CD4-positive, alpha-beta memory T cell (primary cell): ENCODE measurements at regions of chr10 and their contacts with region 1.

Region 1: DNA sequence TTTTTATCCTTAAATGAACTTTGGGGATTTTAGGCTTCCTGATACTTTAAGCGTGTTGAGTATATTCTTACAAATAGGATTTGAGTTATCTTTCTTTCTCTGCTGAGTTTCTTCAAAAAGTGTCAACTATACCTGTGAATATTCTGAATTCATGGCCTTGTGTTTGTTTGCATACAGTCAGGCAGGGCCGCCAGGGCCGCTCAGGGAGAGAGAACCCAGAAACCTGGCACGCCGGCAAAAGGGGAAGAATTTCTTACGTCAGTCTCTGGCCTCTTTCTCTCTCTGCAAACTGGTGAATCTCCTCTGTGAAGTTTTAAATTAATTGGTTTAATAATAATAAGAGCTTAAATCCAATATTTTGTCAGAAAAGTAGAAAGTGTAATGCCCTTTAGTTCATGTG is 29.3 kb upstream of the BNIP3 start:
- DNase-seq: no peak
- H3K4me3 ChIP-seq: no peak overlapping the region
- H3K4me3 Mint-ChIP-seq: no peak overlapping the region
- H3K27ac ChIP-seq: no peak overlapping the region
- H3K27ac Mint-ChIP-seq: no peak overlapping the region
- H3K4me1 ChIP-seq: no peaks in the 10 kb centered on the region
- H3K4me1 Mint-ChIP-seq: no peaks in the 10 kb centered on the region
- H3K27me3 ChIP-seq: no peaks in the 10 kb centered on the region
- H3K27me3 Mint-ChIP-seq: peaks cover 7 to 19% of the 10 kb centered on the region in 2 donors

Region 2: DNA sequence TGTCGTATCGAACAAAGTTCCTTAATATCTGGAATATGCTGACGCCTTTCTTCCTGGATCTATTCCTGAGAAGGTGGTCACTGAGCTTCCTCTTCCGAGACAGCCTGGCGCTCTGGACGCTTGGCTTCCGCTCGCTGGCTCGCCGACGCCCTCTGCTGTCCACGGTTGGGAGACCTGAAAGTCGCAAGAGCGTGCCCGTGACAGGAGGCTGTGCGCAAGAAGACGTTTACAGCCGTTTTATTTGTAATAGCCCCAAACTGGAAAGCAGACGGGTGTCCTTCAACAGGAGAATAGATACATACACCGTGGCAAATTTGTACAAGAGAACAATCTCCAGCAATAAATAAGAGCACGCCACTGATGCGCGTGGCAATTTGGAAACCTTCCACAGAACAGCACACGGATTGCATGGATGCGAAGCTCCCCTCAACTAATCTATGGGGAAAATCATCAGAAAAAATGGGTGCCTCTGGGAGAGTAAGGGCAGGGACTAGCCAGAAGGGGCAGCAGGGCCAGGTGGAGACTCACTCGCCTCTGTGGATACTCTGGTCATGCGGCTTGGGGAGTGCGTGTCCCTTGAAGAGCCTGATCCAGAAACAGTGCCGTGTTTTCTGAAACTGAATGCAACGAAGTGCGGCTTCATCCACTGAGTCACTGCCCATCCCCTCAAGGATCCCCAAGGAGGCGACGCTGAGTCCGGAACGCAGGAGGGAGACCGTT is 12.2 kb after region 1 on chr10:
- CTCF ChIA-PET with region 1: interaction called, 14 read pairs
- POLR2A ChIA-PET with region 1: no interaction called
- intact Hi-C with region 1: no loop called
- DNase-seq: peak; percentile 59 to 74 (median 64)
- H3K4me3 ChIP-seq: no peak overlapping the region
- H3K4me3 Mint-ChIP-seq: peak overlapping the region in 4 of 8 donors; percentile 1 to 56 (median 36)
- H3K27ac ChIP-seq: no peak overlapping the region
- H3K27ac Mint-ChIP-seq: peak overlapping the region in 1 of 7 donors; percentile 59
- H3K4me1 ChIP-seq: peaks cover 9% of the 10 kb centered on the region
- H3K4me1 Mint-ChIP-seq: peaks cover 4 to 10% (median 6%) of the 10 kb centered on the region in 4 donors
- H3K27me3 ChIP-seq: peaks cover under 1% of the 10 kb centered on the region
- H3K27me3 Mint-ChIP-seq: peaks cover 18 to 31% of the 10 kb centered on the region in 2 donors